ENCODE measurements at regions of chr12 and their contacts with region 1.

Region 1: GRCh38 chr12:106986625-106987430 is at the start of gene MTERF2:
- DNase-seq: peak; percentile 55 to 91 (median 76)
- ATAC-seq: peak; percentile 97
- H3K4me3 ChIP-seq: peak within 1 kb of the TSS; percentile 89 to 99
- H3K4me3 Mint-ChIP-seq: peak within 1 kb of the TSS; percentile 94
- H3K27ac ChIP-seq: peak within 1 kb of the TSS; percentile 61 to 75
- H3K27ac Mint-ChIP-seq: peak within 1 kb of the TSS; percentile 85
- H3K4me1 ChIP-seq: peaks cover 16% of the 10 kb centered on the region
- H3K4me1 Mint-ChIP-seq: peaks cover 43% of the 10 kb centered on the region
- H3K27me3 ChIP-seq: no peaks in the 10 kb centered on the region
- H3K27me3 Mint-ChIP-seq: no peaks in the 10 kb centered on the region
- CTCF ChIP-seq: no peak
- total RNA-seq, gene MTERF2: 3.1 to 4.1 TPM

Region 2: GRCh38 chr12:106919910-106920544 is 66.8 kb before region 1 on chr12:
- CTCF ChIA-PET with region 1: interaction called, 3 read pairs
- POLR2A ChIA-PET with region 1: no interaction called
- intact Hi-C with region 1: loop called in 1 of 2 experiments (anchors 2 kb)
- DNase-seq: peak in 3 of 9 experiments; percentile 32 to 67 (median 58)
- ATAC-seq: no peak
- H3K4me3 ChIP-seq: no peak overlapping the region
- H3K4me3 Mint-ChIP-seq: no peak overlapping the region
- H3K27ac ChIP-seq: no peak overlapping the region
- H3K27ac Mint-ChIP-seq: no peak overlapping the region
- H3K4me1 ChIP-seq: peaks cover 7% of the 10 kb centered on the region
- H3K4me1 Mint-ChIP-seq: peaks cover 9% of the 10 kb centered on the region
- H3K27me3 ChIP-seq: no peaks in the 10 kb centered on the region
- H3K27me3 Mint-ChIP-seq: peaks cover 3% of the 10 kb centered on the region
- CTCF ChIP-seq: peak; percentile 95

Region 3: DNA sequence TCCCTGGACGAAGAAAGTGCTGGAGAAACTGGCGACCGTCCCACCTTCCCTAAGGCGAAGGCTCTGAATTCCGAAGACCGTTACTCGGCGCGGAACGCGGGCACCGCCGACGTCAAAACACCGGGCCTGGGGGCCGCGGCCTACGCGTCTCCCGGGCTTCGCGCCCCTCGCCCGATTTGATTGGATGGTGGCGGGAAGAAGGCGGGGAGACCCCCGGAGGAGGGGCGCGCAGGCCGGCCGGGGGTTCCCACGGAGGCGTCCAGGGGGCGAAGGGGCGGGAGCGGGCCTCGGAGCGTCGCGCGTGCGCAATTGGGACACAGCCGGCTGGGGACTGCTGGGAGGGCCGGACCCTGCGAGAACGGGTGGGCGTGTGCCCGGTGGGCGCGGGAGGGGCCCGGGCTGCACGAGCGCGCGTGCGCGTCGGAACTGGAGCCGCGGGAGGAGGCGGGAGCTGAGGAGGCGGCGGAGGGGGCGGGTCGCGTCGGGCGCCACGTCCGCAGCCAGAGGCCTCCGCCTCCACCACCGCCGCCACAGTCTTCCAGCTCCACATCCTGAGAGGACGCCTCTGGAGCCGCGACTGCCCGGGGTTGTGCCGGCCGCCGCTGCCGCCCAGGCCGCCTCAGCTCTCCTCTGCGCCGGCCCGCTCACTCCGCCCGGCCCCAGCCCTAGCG is 31.3 kb before region 1 on chr12 and contains the start of gene TMEM263:
- CTCF ChIA-PET with region 1: interaction called, 7 read pairs
- POLR2A ChIA-PET with region 1: interaction called, 14 read pairs
- intact Hi-C with region 1: loop called (anchors 1 kb)
- DNase-seq: peak; percentile 83 to 98 (median 93)
- ATAC-seq: peak; percentile 81
- H3K4me3 ChIP-seq: peak within 1 kb of the TSS; percentile 87 to 93
- H3K4me3 Mint-ChIP-seq: peak within 1 kb of the TSS; percentile 97
- H3K27ac ChIP-seq: peak within 1 kb of the TSS; percentile 76 to 90
- H3K27ac Mint-ChIP-seq: peak within 1 kb of the TSS; percentile 96
- H3K4me1 ChIP-seq: peaks cover 18% of the 10 kb centered on the region
- H3K4me1 Mint-ChIP-seq: peaks cover 41% of the 10 kb centered on the region
- H3K27me3 ChIP-seq: no peaks in the 10 kb centered on the region
- H3K27me3 Mint-ChIP-seq: no peaks in the 10 kb centered on the region
- CTCF ChIP-seq: no peak
- total RNA-seq, gene TMEM263: 34.3 to 35.3 TPM

Region 4: GRCh38 chr12:106973545-106973944 is 13.3 kb before region 1 on chr12:
- CTCF ChIA-PET with region 1: interaction called, 3 read pairs
- POLR2A ChIA-PET with region 1: interaction called, 3 read pairs
- intact Hi-C with region 1: loop called in 1 of 2 experiments (anchors 2 kb)
- DNase-seq: no peak
- ATAC-seq: no peak
- H3K4me3 ChIP-seq: no peak overlapping the region
- H3K4me3 Mint-ChIP-seq: no peak overlapping the region
- H3K27ac ChIP-seq: no peak overlapping the region
- H3K27ac Mint-ChIP-seq: no peak overlapping the region
- H3K4me1 ChIP-seq: no peaks in the 10 kb centered on the region
- H3K4me1 Mint-ChIP-seq: peaks cover 15% of the 10 kb centered on the region
- H3K27me3 ChIP-seq: no peaks in the 10 kb centered on the region
- H3K27me3 Mint-ChIP-seq: no peaks in the 10 kb centered on the region
- CTCF ChIP-seq: no peak

Region 5: DNA sequence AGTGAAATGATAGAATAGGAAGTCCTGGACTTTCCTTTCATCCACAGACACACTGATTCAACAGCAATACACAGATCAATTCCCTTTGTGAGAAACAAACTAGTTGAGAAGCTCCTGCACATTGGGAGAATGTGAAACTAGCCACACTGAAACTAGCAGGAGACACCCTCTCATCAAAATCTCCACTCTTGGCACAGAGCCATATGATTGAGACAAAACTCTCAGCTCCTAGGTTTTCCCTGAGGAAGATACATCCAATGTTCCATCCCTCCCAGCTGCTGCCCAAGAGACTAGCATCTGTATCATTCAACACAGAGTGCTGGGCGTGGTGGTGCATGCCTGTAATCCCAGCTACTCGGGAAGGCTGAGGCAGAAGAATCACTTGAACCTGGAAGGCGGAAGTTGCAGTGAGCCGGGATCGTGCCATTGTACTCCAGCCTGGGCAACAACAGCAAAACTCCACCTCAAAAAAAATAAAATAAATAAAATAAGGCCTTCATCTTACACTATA is 51.9 kb after region 1 on chr12:
- CTCF ChIA-PET with region 1: no interaction called
- POLR2A ChIA-PET with region 1: no interaction called
- intact Hi-C with region 1: no loop called
- DNase-seq: no peak
- ATAC-seq: no peak
- H3K4me3 ChIP-seq: no peak overlapping the region
- H3K4me3 Mint-ChIP-seq: no peak overlapping the region
- H3K27ac ChIP-seq: no peak overlapping the region
- H3K27ac Mint-ChIP-seq: no peak overlapping the region
- H3K4me1 ChIP-seq: no peaks in the 10 kb centered on the region
- H3K4me1 Mint-ChIP-seq: peaks cover 20% of the 10 kb centered on the region
- H3K27me3 ChIP-seq: no peaks in the 10 kb centered on the region
- H3K27me3 Mint-ChIP-seq: no peaks in the 10 kb centered on the region
- CTCF ChIP-seq: no peak